K562 (cell line): ENCODE measurements at regions of chr15 and their contacts with region 1.

Region 1: GRCh38 chr15:60315878-60316277 is 81.9 kb downstream of the ANXA2 start:
- DNase-seq: no peak
- ATAC-seq: no peak
- H3K4me3 ChIP-seq: no peak overlapping the region
- H3K27ac ChIP-seq: no peak overlapping the region
- H3K4me1 ChIP-seq: no peaks in the 10 kb centered on the region; a peak in 1 of 5 replicates
- H3K27me3 ChIP-seq: peaks cover 0 to 10% of the 10 kb centered on the region in 2 experiments; a peak in 2 of 5 replicates
- CTCF ChIP-seq: no peak
- EP300 ChIP-seq: no peak
- POLR2A ChIP-seq: no peak
- RAD21 ChIP-seq: no peak

Region 2: GRCh38 chr15:59711451-59712243 is 604.2 kb before region 1 on chr15:
- CTCF ChIA-PET with region 1: no interaction called
- POLR2A ChIA-PET with region 1: no interaction called
- in situ Hi-C with region 1: loop called (anchors 10 kb)
- intact Hi-C with region 1: no loop called
- DNase-seq: no peak
- ATAC-seq: no peak
- H3K4me3 ChIP-seq: no peak overlapping the region
- H3K27ac ChIP-seq: no peak overlapping the region
- H3K4me1 ChIP-seq: no peaks in the 10 kb centered on the region
- H3K27me3 ChIP-seq: peaks cover 9 to 11% of the 10 kb centered on the region in 2 experiments; a peak in 4 of 5 replicates
- CTCF ChIP-seq: no peak
- EP300 ChIP-seq: no peak
- POLR2A ChIP-seq: no peak
- RAD21 ChIP-seq: no peak

Region 3: DNA sequence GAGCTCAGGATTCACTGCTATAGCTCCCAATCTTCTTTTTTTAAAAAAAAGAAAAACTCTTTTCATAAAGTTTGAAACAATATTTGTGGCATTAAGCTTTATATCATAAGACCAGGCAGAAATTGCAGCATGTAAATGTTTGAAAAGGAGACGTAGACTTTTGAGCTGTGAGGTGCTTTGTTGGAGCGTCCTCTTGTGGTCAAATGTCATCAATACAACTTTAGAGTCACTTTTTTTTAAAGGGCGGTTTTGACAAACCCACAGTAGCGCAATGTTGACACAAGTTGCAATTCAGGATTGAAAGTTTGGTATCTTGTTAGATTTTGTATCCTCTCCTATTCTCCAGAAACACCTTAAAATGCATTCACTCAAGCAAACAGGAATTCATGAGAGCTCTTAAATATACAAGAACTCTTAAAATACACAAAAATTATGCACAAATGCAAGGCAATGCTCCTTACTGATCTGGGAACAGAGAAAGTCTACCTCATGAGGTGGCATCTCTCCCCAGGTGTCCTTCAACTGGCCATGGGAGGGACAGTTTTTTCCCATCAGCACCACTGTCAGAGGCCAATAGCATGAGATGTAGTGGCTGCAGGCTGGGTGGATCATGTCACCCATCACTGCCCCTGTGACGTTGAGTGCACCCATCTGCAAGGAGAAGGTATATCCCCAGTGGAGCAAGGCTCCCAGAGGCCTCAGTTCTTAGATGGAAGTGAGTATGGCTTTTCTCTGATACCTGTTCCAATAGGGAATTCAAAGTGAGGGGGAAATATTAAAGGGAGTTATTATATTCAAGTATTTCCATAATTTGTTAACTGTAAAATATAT is 11.2 kb after region 1 on chr15:
- CTCF ChIA-PET with region 1: no interaction called
- POLR2A ChIA-PET with region 1: no interaction called
- in situ Hi-C with region 1: no loop called
- intact Hi-C with region 1: no loop called
- DNase-seq: peak; percentile 31 to 68 (median 48)
- ATAC-seq: peak; percentile 69
- H3K4me3 ChIP-seq: no peak overlapping the region
- H3K27ac ChIP-seq: no peak overlapping the region
- H3K4me1 ChIP-seq: no peaks in the 10 kb centered on the region
- H3K27me3 ChIP-seq: peaks cover 0 to 10% of the 10 kb centered on the region in 2 experiments; a peak in 3 of 5 replicates
- CTCF ChIP-seq: peak; percentile 69 to 92 (median 75)
- EP300 ChIP-seq: no peak
- POLR2A ChIP-seq: no peak
- RAD21 ChIP-seq: peak; percentile 91 to 95